ENCODE measurements at regions of chr13 and their contacts with region 1.

Region 1: GRCh38 chr13:25971459-25972145 is 80.2 kb downstream of the SHISA2 start:
- DNase-seq: no peak
- ATAC-seq: no peak
- H3K4me3 ChIP-seq: no peak overlapping the region
- H3K27ac ChIP-seq: no peak overlapping the region
- H3K4me1 ChIP-seq: peaks cover 9% of the 10 kb centered on the region
- H3K27me3 ChIP-seq: no peaks in the 10 kb centered on the region
- CTCF ChIP-seq: no peak

Region 2: GRCh38 chr13:26022538-26023292 is 51.1 kb after region 1 on chr13:
- intact Hi-C with region 1: loop called in 1 of 2 experiments (anchors 5 kb)
- DNase-seq: peak; percentile 86 to 94
- ATAC-seq: peak; percentile 94 to 98 (median 96)
- H3K4me3 ChIP-seq: no peak overlapping the region
- H3K27ac ChIP-seq: peak overlapping the region; percentile 84
- H3K4me1 ChIP-seq: peaks cover 30% of the 10 kb centered on the region
- H3K27me3 ChIP-seq: no peaks in the 10 kb centered on the region
- CTCF ChIP-seq: no peak

Region 3: DNA sequence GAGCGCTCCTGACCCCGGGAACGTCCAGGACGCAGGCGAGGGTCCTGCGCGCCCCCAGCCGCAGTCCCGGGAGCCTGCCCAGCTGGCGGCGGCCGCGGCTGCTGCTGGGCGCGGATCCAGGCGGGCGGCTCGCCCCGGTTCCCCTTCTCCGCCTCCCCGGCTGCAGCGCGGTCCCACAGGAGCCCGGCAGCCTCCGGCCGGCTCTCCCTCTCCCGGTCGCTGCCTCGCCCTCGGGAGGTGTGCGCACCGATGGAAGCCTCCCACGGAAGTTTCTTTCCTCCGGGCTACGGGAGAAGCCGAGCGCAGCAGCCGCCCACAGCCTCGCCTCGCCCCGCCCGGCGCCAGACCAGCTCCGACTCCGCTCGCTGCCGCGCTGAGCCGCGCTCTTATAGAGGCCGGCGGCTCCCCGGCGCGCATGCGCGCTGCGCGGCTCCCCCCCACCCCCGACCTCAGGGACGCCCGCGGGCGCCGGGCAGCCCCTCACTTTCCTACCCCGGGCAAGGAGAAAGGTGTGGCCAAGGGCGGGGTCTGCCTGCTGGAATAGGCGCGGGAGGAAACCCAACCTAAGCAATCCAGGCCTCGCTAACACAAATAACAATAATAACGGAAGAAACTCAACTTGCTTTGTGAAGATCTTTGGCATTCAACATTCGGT is 80.2 kb after region 1 on chr13 and contains the start of gene SHISA2:
- intact Hi-C with region 1: loop called in 1 of 2 experiments (anchors 5 kb)
- DNase-seq: peak; percentile 37 to 64
- ATAC-seq: peak; percentile 74 to 80 (median 76)
- H3K4me3 ChIP-seq: peak within 1 kb of the TSS; percentile 73
- H3K27ac ChIP-seq: peak within 1 kb of the TSS; percentile 82
- H3K4me1 ChIP-seq: peaks cover 6% of the 10 kb centered on the region
- H3K27me3 ChIP-seq: peaks cover 0 to 14% (median 0%) of the 10 kb centered on the region in 3 donors
- CTCF ChIP-seq: no peak
- total RNA-seq, gene SHISA2: 3.2 to 9.4 (median 5.2) TPM

Measured in psoas muscle (tissue), 8 donors.